ENCODE measurements at regions of chr2 and their contacts with region 1.

Region 1: DNA sequence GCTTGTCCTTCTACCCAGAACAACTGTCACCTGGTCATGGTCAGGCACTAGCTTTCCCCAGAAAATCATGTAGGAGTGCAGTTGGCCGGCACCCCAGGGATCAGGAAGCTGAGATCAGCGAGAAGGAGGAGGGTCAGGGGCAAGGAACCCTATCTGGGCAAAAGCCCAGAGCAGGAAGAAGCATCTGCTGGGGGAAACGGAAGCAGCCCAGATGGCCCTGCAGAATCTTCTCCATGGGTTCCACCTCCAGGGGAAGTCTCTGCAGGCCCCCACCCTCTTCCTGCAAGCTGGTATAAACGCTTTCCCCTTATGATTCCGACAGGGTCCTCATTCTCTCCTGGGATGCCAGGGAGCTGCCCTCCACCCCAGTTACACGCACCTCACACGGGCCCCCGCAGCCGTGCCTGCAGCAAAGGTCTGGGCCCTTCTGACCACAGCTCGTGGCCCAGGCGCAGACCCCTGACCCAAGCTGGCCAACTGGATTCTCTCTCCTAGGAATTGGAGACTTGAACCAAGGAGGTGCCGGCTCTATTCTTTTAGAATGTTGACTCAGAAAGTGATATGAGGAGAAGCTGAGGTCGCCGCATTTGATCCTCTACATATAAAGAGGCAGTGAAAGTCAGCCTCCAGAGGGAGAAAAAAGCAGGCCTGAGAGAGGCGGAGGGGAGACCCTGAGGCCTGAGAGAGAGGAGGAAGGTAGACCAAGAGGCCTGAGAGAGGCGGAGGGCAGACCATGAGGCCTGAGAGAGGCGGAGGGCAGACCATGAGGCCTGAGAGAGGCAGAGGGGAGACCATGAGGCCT is 71.0 kb downstream of the STPG4 start:
- DNase-seq: peak; percentile 66 to 77 (median 73)
- ATAC-seq: peak; percentile 11 to 52 (median 43)
- H3K4me3 ChIP-seq: peak overlapping the region in 1 of 12 donors; percentile 38
- H3K27ac ChIP-seq: peak overlapping the region in 10 of 12 donors; percentile 29 to 89 (median 65)
- H3K4me1 ChIP-seq: peaks cover 25 to 78% (median 70%) of the 10 kb centered on the region in 12 donors
- H3K27me3 ChIP-seq: no peaks in the 10 kb centered on the region
- CTCF ChIP-seq: no peak
- POLR2A ChIP-seq: no peak

Region 2: GRCh38 chr2:47070920-47071824 is 12.9 kb before region 1 on chr2:
- intact Hi-C with region 1: loop called in 1 of 10 experiments (anchors 1 kb)
- DNase-seq: peak; percentile 84 to 92 (median 87)
- ATAC-seq: peak; percentile 11 to 46 (median 34)
- H3K4me3 ChIP-seq: peak overlapping the region in 3 of 12 donors; percentile 3 to 13 (median 12)
- H3K27ac ChIP-seq: peak overlapping the region; percentile 75 to 99 (median 94)
- H3K4me1 ChIP-seq: peaks cover 30 to 96% (median 77%) of the 10 kb centered on the region in 12 donors
- H3K27me3 ChIP-seq: no peaks in the 10 kb centered on the region
- CTCF ChIP-seq: no peak
- POLR2A ChIP-seq: no peak

Measured in heart left ventricle (tissue), 16 donors.